Activated CD4-positive, alpha-beta T cell treated with anti-CD3 and anti-CD28 coated beads, Interleukin-2, amount 10 ng/mL, durations not matched to agents 24 days and 14 days (primary cell): ENCODE measurements at regions of chr2 and their contacts with region 1.

Region 1: GRCh38 chr2:68832233-68832869 is 38.8 kb downstream of the BMP10 start:
- DNase-seq: peak; percentile 74
- H3K4me3 Mint-ChIP-seq: peak overlapping the region; percentile 57
- H3K27ac Mint-ChIP-seq: peak overlapping the region; percentile 85
- H3K4me1 Mint-ChIP-seq: peaks cover 73% of the 10 kb centered on the region
- H3K27me3 Mint-ChIP-seq: no peaks in the 10 kb centered on the region

Region 2: DNA sequence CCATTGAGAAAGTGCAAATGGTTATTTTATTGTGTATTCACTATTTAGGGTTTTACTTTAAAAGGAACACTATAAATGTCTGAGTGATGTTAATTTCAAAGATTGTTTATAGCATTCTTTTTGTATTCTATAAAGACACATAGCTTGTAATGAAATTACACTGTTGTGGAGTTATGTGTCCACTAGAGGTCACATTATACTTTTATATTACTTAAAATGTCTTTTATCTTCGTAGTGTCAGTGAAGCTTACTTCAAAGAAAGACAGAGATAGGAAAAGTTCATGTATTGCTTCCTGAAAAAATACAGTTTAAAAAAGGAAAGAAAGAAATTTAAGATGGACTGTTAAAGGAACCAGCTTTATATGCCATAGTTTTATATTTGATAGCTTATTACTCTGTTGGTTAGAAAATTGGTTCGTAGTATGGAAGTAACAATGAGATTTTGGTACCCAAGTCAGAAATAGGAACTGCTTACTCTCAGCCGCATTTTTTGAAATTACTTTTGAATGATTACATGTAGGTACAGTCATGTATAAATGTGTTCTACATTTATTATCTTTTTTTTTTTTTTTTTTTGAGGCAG is 344.5 kb before region 1 on chr2:
- intact Hi-C with region 1: no loop called
- DNase-seq: no peak
- H3K4me3 Mint-ChIP-seq: no peak overlapping the region
- H3K27ac Mint-ChIP-seq: no peak overlapping the region
- H3K4me1 Mint-ChIP-seq: peaks cover 2% of the 10 kb centered on the region
- H3K27me3 Mint-ChIP-seq: peaks cover 3% of the 10 kb centered on the region

Region 3: DNA sequence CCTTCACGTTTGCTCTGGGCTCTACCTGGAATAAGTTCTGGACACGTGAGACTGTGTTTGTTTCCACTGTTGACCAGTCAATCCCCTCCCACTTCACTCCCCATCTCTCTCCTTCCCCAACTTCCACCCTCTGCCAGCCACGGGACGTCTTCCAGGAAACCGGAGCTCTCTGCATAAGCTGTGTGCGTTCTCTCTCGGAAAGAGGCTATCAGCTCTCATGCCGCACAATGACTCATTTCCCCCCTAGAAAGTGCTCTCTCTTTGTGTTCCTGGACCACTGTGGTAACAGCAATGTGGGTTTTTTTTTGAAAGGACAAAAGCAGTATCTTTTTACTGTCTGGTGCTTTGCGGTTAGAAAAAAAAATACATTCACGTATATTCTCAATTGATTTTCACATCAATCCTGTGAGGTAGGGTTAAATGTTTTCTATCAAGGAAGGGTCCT is 178.8 kb before region 1 on chr2:
- intact Hi-C with region 1: loop called (anchors 5 kb)
- DNase-seq: peak; percentile 88
- H3K4me3 Mint-ChIP-seq: peak overlapping the region; percentile 66
- H3K27ac Mint-ChIP-seq: peak overlapping the region; percentile 71
- H3K4me1 Mint-ChIP-seq: peaks cover 46% of the 10 kb centered on the region
- H3K27me3 Mint-ChIP-seq: peaks cover 36% of the 10 kb centered on the region

Region 4: DNA sequence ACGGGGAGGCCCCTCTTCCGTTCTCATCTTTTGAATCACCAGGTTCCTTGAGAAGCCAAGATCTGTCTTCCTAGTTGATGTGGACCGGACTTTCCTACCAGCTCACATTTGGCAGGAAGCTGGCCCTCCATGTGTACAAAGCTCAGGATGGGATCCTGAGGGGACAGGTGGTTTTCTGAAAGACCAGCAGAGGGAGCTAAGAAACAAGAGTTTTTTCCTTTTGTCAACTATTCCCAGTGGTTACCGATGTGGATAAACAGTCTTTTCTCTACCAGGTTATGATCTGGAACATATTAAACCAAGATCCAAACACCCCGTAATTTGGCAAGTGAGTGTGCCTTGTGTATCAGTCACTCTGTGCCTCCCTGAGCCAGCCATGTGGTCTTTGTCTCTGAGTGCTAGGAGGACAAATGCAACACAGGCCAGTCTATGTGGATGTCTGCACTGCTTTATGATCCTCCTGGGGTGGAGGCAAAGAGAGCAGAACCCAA is 122.9 kb before region 1 on chr2:
- intact Hi-C with region 1: loop called (anchors 2 kb)
- DNase-seq: peak; percentile 74
- H3K4me3 Mint-ChIP-seq: peak overlapping the region; percentile 11
- H3K27ac Mint-ChIP-seq: peak overlapping the region; percentile 64
- H3K4me1 Mint-ChIP-seq: peaks cover 29% of the 10 kb centered on the region
- H3K27me3 Mint-ChIP-seq: peaks cover 4% of the 10 kb centered on the region

Region 5: DNA sequence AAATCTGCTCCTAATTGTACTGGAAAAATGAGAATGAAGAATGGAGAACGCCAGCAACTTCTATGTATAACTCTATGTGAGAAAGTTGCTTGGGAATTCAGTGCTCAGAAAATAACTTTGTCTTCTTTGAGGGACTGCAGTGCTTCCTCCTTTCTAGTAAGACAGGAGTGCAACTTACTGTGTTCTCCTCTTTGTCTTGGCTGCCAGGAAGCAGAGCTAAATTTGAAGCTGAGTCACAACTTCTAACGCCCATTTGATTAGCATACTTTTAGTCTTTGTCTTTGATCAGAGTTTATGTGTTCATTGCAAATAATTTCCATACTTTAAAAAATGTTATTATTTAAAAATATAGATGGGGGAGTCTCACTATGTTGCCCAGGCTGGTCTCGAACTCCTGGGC is 91.1 kb before region 1 on chr2:
- intact Hi-C with region 1: loop called (anchors 2 kb)
- DNase-seq: peak; percentile 73
- H3K4me3 Mint-ChIP-seq: no peak overlapping the region
- H3K27ac Mint-ChIP-seq: peak overlapping the region; percentile 98
- H3K4me1 Mint-ChIP-seq: peaks cover 85% of the 10 kb centered on the region
- H3K27me3 Mint-ChIP-seq: no peaks in the 10 kb centered on the region

Region 6: DNA sequence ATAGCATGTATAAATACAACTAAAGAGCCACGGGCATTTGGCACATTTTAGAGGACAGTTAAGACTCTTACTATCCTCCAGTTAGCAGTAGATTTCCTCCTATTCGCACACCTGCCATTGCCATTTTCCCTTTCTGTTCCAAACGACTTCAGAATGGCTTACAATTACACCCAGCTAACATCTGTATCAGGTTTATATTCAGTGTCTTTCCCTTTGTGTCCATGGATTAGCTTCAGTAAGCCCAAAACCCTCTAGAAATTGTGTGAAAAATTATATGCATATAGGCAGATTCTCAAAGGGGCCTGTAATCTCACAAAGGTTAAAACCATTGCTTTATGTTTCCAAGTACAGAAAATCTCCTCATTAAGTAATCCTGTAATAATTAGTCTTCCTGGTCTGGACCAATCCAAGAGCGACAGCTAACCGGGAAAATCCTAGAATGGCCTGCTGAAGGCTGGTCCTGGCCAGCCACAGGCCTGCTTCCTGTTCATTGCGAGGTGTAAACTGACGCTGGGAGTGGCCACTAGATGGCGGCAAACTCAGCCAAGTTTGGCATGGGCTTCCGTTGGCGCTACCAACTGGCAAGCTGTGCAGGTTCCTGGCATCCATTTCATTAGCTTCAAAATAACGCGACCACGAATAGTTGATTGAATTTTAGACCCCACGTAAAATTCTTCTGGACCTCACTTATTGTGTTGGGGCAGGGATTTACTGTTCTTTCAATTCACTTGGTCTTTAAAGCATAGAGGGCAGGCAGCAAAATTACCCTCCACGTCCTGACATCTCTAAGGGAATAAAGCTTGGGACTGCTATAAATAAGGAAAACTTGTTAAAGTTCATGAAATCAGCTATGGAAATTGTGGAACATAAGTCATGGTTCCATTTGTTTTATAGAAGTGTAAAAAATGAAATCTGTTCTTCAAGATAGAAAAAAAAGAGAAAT is 80.7 kb before region 1 on chr2:
- intact Hi-C with region 1: loop called (anchors 1 kb)
- DNase-seq: peak; percentile 96
- H3K4me3 Mint-ChIP-seq: peak overlapping the region; percentile 23
- H3K27ac Mint-ChIP-seq: peak overlapping the region; percentile 83
- H3K4me1 Mint-ChIP-seq: peaks cover 73% of the 10 kb centered on the region
- H3K27me3 Mint-ChIP-seq: no peaks in the 10 kb centered on the region

Region 7: GRCh38 chr2:68796294-68796905 is 36.0 kb before region 1 on chr2:
- intact Hi-C with region 1: loop called (anchors 2 kb)
- DNase-seq: no peak
- H3K4me3 Mint-ChIP-seq: peak overlapping the region; percentile 44
- H3K27ac Mint-ChIP-seq: peak overlapping the region; percentile 74
- H3K4me1 Mint-ChIP-seq: peaks cover 54% of the 10 kb centered on the region
- H3K27me3 Mint-ChIP-seq: no peaks in the 10 kb centered on the region

Region 8: DNA sequence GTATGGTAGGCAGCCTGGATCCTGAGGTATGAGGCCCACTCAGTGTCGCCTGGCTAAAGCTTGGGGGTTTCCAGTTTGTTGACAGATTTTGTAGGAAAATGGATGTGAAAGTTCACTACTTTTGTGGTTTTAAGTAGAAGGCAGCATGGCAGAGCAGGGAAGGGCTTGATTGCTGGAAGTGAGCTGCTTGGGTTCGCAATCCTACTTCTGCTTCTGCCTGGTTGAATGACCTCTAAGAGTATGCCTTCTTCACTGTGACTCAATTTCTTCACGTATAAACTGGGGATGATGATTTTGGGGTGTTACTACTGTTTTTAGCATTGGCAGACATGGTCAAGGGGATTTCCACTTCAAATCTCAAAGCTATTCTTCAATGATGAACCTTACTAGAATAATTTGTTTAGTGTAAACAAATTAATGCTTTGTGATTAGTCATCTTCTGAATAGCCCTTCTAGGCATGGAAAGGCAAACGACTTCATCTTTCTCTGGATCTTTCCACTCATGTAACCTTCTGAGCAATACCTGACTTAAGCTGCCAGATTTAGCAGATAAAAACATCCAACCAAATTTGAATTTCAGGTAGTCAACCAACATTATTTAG is 25.6 kb after region 1 on chr2:
- intact Hi-C with region 1: no loop called
- DNase-seq: no peak
- H3K4me3 Mint-ChIP-seq: no peak overlapping the region
- H3K27ac Mint-ChIP-seq: no peak overlapping the region
- H3K4me1 Mint-ChIP-seq: peaks cover 8% of the 10 kb centered on the region
- H3K27me3 Mint-ChIP-seq: peaks cover 9% of the 10 kb centered on the region

Region 9: DNA sequence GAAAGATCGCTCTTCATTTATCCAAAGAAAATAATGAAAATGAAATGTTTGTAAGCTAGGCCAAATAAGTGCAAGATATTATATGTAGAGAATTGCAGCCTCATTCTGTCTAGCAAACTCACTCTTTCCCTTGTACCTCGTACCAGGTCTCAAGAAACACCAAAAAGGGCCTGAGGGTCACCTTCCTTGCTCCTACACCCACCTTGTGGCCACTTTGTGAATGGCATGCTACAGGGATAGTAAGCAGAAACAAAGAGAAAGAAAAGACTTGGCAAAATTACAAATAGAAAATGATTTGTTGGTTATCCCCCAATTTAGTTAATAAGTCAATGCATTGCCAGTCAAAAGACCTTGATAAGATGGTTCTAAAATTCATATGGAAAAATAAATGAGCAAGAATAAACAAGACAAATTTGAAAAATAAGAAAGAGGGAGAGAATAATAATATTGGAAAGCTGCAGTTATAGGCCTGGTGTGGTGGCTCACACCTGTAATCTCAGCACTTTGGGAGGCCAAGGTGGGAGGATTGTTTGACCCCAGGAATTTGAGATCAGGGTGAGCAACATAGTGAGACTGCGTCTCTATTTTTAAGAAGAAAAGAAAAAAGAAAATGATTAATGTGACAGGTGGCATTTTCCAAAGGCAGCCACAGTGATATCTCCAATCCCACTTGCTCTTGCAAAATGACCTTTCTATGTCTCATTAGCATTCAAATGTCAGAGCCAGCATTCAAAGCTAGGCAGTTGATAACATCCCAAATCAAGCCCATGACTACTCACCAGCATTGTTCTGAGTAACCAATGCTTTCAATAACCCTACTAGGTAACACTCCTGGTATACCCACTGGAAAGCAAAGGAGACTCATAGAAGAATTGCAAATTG is 77.7 kb after region 1 on chr2:
- intact Hi-C with region 1: loop called (anchors 2 kb)
- DNase-seq: peak; percentile 91
- H3K4me3 Mint-ChIP-seq: peak overlapping the region; percentile 13
- H3K27ac Mint-ChIP-seq: peak overlapping the region; percentile 67
- H3K4me1 Mint-ChIP-seq: peaks cover 35% of the 10 kb centered on the region
- H3K27me3 Mint-ChIP-seq: no peaks in the 10 kb centered on the region